ENCODE measurements at regions of chr2 and their contacts with region 1.

Region 1: GRCh38 chr2:44044281-44044720 is 48.5 kb upstream of the LRPPRC start:
- DNase-seq: peak; percentile 86
- H3K4me3 ChIP-seq: no peak overlapping the region
- H3K27ac ChIP-seq: no peak overlapping the region
- H3K4me1 ChIP-seq: no peaks in the 10 kb centered on the region
- CTCF ChIP-seq: peak; percentile 84

Region 2: DNA sequence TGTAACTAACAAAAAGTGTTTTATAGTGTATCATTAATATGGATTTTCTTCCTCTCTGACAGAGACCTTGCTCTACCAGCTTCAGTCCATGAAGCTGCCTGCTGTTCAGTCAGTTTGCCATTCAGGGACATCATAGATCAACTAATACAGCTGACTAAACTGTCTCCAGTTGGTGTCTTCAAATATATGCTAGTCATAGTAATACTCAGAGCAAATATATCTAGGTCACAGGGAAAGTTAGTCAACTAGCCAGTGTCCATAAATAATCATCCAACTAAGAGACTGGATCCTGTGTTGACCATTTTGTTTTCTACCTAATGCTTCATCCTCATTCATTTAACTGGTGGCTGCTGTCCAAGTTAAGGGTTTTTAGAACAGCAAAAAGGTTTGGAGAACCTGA is 10.4 kb before region 1 on chr2:
- CTCF ChIA-PET with region 1: no interaction called
- POLR2A ChIA-PET with region 1: no interaction called
- intact Hi-C with region 1: no loop called
- DNase-seq: no peak
- H3K4me3 ChIP-seq: no peak overlapping the region
- H3K27ac ChIP-seq: no peak overlapping the region
- H3K4me1 ChIP-seq: no peaks in the 10 kb centered on the region
- CTCF ChIP-seq: no peak

Region 3: DNA sequence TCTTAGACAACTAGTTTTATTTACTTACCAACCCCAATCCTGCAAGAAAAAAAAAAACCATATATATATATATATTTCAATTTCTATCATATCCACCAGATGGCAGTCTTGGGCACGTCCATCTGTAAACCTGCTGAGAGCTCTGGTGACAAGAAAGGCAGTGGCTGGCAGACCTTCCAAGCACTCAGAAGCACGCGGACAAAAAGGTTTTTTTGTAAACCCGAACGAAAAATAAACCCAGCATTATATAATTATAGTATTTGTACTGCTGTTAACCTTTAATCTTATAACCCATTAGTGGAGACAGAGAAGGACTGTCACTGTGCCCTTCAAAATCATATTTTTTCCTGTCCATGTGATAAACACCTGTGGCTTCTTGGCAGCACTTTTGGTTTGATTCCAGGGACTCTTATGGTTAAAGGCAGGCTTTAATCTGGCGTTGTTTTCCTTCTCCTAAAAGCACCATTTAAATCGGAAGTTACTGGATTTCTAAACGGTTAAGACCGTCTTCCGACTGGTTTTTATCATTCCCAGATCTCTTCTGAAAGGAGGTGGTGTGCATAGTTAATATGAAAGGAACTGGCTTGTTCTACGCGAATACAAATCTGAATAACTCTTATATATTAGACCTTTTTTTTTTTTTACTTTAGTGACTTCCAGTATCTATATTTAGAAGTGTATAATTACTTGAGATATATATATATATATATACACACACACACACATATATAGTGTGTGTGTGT is 200.0 kb after region 1 on chr2:
- CTCF ChIA-PET with region 1: no interaction called
- POLR2A ChIA-PET with region 1: no interaction called
- intact Hi-C with region 1: loop called (anchors 2 kb)
- DNase-seq: peak; percentile 79
- H3K4me3 ChIP-seq: peak overlapping the region; percentile 23
- H3K27ac ChIP-seq: no peak overlapping the region
- H3K4me1 ChIP-seq: peaks cover 4% of the 10 kb centered on the region
- CTCF ChIP-seq: peak; percentile 83

Region 4: GRCh38 chr2:44342854-44343253 is 298.6 kb after region 1 on chr2:
- CTCF ChIA-PET with region 1: no interaction called
- POLR2A ChIA-PET with region 1: no interaction called
- intact Hi-C with region 1: loop called (anchors 1 kb)
- DNase-seq: peak; percentile 44
- H3K4me3 ChIP-seq: no peak overlapping the region
- H3K27ac ChIP-seq: no peak overlapping the region
- H3K4me1 ChIP-seq: no peaks in the 10 kb centered on the region
- CTCF ChIP-seq: peak; percentile 77

Region 5: DNA sequence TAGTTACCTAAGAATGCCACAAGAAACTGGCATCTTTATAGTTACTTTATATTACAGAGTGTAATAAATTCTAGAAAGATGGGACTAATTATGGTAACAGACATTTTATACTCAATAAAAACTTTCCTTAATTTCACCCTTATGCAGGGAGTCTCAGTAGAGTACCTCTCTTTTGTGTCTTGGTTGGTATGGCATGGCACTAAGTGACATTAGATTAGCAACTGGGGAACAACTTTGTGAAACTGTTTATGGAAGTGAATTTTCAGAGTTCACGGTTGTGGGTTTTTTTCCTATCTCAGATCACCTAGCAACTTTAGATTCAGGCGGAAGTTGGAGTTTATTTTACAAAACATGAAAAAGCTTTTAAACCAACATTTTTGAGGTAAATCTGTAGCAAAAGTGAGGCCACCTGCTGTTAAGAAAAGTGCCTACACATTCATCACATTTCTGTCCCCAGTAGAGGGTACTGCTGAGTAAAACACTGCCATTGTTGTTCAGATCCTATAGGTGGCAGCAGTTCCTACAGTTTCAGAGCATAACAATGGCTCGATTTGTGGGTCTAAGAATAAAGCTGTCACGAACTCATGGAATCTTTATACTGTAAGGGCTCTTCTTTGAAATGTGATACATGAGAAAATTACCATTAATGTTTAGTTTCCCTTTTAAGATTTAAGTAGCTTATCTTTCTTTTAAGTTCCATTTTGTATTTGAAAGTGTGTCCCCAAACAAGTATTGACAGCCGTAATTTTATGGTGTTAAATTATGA is 435.0 kb after region 1 on chr2:
- CTCF ChIA-PET with region 1: no interaction called
- POLR2A ChIA-PET with region 1: no interaction called
- intact Hi-C with region 1: loop called (anchors 5 kb)
- DNase-seq: peak; percentile 83
- H3K4me3 ChIP-seq: no peak overlapping the region
- H3K27ac ChIP-seq: no peak overlapping the region
- H3K4me1 ChIP-seq: no peaks in the 10 kb centered on the region
- CTCF ChIP-seq: peak; percentile 100